ENCODE measurements at regions of chr3 and their contacts with region 1.

Region 1: GRCh38 chr3:146521394-146521793 is 23.0 kb downstream of the PLSCR1 start:
- DNase-seq: no peak
- H3K4me3 Mint-ChIP-seq: no peak overlapping the region
- H3K27ac Mint-ChIP-seq: no peak overlapping the region
- H3K4me1 Mint-ChIP-seq: peaks cover 11% of the 10 kb centered on the region
- H3K27me3 Mint-ChIP-seq: no peaks in the 10 kb centered on the region

Region 2: GRCh38 chr3:146536696-146537095 is 15.3 kb after region 1 on chr3:
- intact Hi-C with region 1: loop called (anchors 2 kb)
- DNase-seq: no peak
- H3K4me3 Mint-ChIP-seq: no peak overlapping the region
- H3K27ac Mint-ChIP-seq: no peak overlapping the region
- H3K4me1 Mint-ChIP-seq: peaks cover 50% of the 10 kb centered on the region
- H3K27me3 Mint-ChIP-seq: no peaks in the 10 kb centered on the region

Region 3: DNA sequence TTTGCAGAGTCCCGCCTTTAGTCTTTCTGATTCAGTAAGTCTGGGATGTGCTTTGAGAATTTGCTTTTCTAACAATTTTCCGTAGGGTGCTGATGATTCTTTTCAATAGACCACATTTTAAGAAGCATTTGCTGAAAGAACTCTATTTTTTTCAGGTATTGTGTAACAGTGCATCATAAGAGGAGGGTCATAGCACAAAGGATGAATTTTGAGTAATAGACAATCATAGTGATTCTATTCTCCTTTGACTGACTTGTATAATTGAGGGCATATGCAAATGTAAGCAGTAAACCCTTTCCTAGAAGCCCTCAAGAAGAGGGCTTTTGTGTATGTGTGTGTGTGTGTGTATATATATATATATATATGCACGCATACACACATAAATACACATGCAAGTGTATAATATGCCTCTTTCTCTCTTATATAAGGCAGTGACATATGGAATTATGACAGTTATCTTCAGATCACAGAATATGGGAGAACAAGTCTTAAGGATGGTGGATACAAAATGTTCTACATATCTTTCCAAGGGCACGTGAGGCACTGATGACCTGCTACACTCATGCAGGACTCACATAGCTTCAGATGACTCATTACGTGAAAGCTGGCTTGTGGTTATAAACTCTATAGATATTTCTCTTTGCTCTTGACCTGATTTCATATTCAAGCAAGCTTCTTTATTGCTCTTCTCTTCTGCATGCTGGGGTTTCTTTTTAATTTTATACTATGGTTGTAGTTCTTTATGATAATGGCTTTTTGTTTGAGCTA is 29.5 kb after region 1 on chr3:
- intact Hi-C with region 1: no loop called
- DNase-seq: no peak
- H3K4me3 Mint-ChIP-seq: no peak overlapping the region
- H3K27ac Mint-ChIP-seq: no peak overlapping the region
- H3K4me1 Mint-ChIP-seq: peaks cover 51% of the 10 kb centered on the region
- H3K27me3 Mint-ChIP-seq: peaks cover 4% of the 10 kb centered on the region

Region 4: DNA sequence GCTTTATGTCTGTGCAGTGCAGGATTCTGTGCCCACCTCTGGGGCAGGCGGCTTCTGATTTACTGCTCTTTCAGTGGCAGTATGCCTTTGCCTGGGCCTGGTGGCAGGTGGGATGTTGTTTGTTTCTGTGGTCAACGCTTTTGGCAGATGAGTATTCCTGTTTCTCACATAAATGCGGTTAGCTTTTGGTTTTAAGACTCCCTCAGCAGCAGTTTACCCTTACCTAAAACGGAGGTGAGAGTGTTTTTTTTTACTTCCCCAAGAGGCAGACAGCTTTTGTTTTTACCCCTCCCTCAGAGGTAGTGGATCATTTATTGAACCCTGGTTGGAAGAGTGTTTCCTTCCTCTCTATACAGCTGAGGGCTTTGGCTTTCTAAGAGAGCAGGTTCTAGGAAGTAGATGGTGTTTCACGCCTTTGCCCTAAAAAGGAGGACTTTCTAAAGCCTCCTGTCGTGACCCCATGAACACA is 217.8 kb after region 1 on chr3:
- intact Hi-C with region 1: no loop called
- DNase-seq: no peak
- H3K4me3 Mint-ChIP-seq: no peak overlapping the region
- H3K27ac Mint-ChIP-seq: no peak overlapping the region
- H3K4me1 Mint-ChIP-seq: no peaks in the 10 kb centered on the region
- H3K27me3 Mint-ChIP-seq: no peaks in the 10 kb centered on the region

Measured in activated T-helper 2 cell treated with anti-CD3 and anti-CD28 coated beads, Interferon-gamma antibody, Interleukin-2, Interleukin-4, amounts not matched to agents 10 μg/mL and 5 μg/mL and 100 μg/mL, durations not matched to agents 14 hours and 24 hours and 36 hours (primary cell).